ENCODE measurements at regions of chr2 and their contacts with region 1.

Region 1: DNA sequence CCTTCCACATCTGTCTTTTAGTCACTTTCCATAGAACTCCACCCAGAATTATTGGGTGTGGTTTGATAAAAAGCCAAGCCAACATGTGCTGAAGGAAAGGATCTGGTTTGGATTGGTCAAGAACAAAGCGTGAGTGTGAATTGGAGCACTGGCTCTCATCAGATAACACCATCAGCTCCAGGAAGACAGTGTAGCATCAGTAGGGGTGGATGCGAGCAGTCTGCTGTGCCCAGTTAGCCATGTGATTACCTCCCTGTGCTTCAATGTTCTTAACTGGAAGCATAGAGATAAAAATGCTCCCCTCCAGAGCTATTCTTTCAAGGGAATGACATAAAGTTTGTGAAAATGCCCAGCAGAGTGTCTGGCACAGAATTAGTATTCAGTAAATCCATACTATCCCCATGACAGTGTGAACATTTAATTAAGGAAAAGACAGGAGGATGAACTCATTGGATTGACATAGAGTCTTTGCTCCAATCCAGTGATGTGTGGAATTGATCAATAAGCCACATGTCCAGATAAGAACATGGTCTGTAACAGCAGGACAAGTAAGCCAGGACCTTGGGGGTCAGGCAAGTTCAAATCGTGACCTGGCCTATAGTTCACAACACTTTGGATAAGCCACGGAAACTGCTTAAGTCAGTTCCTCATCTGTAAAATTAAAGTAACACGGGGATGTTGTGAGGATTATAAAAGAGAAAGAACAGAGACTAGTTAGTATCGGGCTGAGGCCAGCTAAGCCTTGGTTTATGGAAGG is 68.0 kb downstream of the FAM124B start:
- DNase-seq: no peak
- H3K4me3 ChIP-seq: no peak overlapping the region
- H3K27ac ChIP-seq: no peak overlapping the region
- H3K4me1 ChIP-seq: no peaks in the 10 kb centered on the region
- H3K27me3 ChIP-seq: no peaks in the 10 kb centered on the region
- CTCF ChIP-seq: no peak
- POLR2A ChIP-seq: no peak

Region 2: DNA sequence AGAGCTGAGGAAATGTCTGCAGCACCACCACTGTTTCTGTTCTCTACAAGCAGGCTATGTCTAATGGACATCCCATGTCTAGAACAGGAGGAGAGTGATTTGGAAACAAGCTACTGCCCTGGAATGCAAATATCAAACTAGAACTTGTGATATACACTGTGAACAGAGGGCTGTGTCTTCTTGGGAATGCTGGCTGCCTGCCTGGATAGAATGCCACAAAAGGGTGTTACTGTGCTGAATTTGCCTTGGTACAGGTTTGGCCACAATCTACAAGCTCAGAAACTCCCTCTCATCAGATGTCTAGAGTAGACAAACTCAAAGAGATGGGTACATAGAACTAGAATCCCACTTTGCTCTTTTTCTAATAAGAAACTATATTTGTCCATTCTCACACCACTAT is 1236.1 kb after region 1 on chr2:
- intact Hi-C with region 1: loop called (anchors 5 kb)
- DNase-seq: no peak
- H3K4me3 ChIP-seq: no peak overlapping the region
- H3K27ac ChIP-seq: no peak overlapping the region
- H3K4me1 ChIP-seq: no peaks in the 10 kb centered on the region
- H3K27me3 ChIP-seq: no peaks in the 10 kb centered on the region
- CTCF ChIP-seq: no peak
- POLR2A ChIP-seq: no peak

Measured in breast epithelium (tissue), 4 donors.